ENCODE measurements at regions of chr11 and their contacts with region 1.

Region 1: DNA sequence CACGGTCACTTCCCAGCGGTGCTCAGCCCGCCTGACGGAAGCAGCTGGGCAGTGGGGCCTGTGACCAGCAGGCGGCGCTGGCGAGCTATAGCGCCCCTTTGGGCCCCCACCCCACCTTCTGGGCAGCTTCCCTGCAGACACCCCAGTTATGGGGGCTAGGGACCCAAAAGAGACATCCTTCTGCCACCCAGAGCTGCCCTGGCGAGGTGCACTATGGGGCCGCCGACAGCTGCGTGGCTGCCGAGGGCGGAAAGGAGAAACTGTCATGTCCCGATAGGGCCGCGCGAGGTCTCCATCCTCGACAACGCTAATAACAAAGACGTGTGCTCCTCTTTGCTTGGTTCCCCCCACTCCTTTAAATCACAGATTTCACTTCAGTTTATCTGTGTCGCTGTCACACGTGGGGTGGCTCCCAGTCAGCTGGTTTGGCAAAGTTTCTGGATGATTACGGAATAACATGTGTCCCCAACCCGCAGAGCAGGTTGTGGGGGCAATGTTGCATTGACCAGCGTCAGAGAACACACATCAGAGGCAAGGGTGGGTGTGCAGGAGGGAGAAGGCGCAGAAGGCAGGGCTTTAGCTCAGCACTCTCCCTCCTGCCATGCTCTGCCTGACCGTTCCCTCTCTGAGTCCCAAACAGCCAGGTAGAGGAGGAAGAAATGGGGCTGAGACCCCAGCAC is 674 bp upstream of the MYO7A start:
- DNase-seq: peak; percentile 35 to 67
- ATAC-seq: peak; percentile 62 to 86 (median 74)
- H3K4me3 ChIP-seq: peak overlapping the region in 9 of 10 donors; percentile 8 to 56 (median 46)
- H3K27ac ChIP-seq: peak overlapping the region in 4 of 10 donors; percentile 2 to 53 (median 32)
- H3K4me1 ChIP-seq: peaks cover 6 to 43% (median 27%) of the 10 kb centered on the region in 9 donors
- H3K27me3 ChIP-seq: peaks cover 0 to 9% (median 0%) of the 10 kb centered on the region in 7 donors
- CTCF ChIP-seq: peak; percentile 96 to 100 (median 99)

Region 2: DNA sequence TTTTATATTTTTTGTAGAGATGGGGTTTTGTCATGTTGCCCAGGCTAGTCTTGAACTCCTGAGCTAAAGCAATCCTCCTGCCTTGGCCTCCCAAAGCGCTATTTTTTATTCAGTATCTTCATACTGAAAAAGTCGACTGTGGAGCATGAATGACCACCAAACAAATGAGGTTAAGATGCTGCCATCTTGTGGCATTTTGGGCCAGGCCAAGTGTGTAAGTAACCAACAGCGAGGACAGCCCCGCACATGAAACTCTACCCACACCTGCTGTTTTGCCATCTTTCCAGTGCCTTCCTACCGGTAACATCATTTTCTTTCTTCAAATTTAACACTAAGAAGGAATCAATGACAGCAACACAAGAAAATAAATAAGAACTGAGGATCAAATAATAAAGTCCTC is 430.2 kb after region 1 on chr11:
- intact Hi-C with region 1: loop called in 2 of 10 experiments (anchors 5 to 10 kb)
- DNase-seq: no peak
- ATAC-seq: no peak
- H3K4me3 ChIP-seq: no peak overlapping the region
- H3K27ac ChIP-seq: no peak overlapping the region
- H3K4me1 ChIP-seq: no peaks in the 10 kb centered on the region
- H3K27me3 ChIP-seq: no peaks in the 10 kb centered on the region
- CTCF ChIP-seq: peak in 4 of 9 donors; percentile 16 to 26 (median 18)

Measured in heart right ventricle (tissue), 16 donors.